ENCODE measurements at regions of chr10 and their contacts with region 1.

Region 1: DNA sequence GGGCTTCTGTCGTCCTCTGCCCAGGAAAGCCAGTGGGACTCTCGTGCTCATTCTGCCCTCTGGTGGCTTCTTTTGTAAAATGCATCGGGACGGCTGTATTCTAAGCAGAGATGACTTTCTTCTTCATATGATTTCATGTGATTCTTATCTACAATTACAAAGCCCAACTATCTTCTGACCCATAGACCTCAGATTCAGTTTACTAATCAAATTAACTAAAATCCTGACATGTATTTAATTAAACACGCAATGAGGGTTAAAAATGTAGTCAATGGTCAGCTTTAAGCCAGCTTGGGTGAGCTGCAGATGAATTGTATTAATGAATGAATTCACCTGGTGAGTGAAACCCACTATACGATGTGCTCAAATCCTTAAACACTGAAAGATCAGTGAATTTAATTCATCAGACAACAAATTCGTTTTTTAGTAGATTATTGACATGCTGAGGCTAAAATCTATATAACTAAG is 117.6 kb upstream of the FAM204A start:
- DNase-seq: peak; percentile 69
- ATAC-seq: peak; percentile 76
- H3K4me3 Mint-ChIP-seq: peak overlapping the region; percentile 25
- H3K27ac Mint-ChIP-seq: no peak overlapping the region
- H3K4me1 Mint-ChIP-seq: peaks cover 3% of the 10 kb centered on the region
- H3K27me3 Mint-ChIP-seq: peaks cover 32% of the 10 kb centered on the region

Region 2: DNA sequence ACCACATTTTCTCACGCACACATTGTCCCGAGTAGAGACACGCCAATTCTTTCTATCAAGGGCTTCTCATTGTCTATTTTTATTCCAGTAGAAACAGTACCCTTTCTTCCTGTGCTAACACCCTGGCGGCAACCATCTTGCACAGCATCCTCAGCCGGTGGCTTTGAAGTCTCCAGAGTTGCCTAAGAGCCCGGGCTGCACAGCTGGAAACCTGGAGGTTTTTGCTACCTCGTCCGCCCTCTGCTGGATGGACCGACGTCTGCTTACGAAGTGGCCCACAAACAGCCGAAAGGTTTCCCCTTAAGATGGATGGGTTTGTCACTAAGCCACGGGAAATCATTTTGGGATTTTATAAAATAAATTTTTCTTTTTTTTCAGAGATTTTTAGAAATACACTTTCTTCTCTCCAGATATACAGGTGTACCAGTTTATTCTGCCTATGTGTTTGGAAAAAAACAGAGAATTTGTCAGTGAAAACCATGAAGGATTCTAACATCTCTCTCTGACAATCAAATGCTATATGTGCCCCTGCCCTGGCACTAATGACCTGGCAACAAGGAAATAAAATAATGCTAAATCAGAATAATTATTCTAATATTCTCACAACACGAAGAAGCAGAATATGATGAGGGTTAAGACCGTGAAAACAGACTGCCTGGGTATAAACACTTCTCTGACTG is 35.8 kb before region 1 on chr10:
- CTCF ChIA-PET with region 1: no interaction called
- DNase-seq: peak; percentile 80
- ATAC-seq: peak; percentile 89
- H3K4me3 Mint-ChIP-seq: no peak overlapping the region
- H3K27ac Mint-ChIP-seq: no peak overlapping the region
- H3K4me1 Mint-ChIP-seq: peaks cover 3% of the 10 kb centered on the region
- H3K27me3 Mint-ChIP-seq: peaks cover 22% of the 10 kb centered on the region

Region 3: DNA sequence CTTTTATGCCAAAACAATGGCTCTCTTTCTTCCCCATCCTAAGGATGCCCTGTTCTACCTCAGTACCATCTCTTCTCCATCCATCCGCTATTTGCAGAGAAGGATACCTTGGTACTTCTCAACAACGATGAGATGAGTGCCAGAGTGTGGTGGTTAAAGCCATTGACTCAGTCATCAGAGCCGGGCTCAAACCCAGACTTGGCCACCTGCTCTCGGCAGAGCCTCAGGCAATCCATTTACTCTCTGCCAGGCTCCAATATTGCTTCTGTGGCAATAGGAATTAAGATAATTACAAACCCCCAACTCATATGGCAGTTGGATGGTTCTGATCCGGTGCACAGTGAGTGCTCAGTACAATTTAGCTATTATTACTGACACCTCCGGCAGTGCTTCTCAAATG is 14.4 kb after region 1 on chr10:
- CTCF ChIA-PET with region 1: interaction called, 11 read pairs
- DNase-seq: peak; percentile 1
- ATAC-seq: no peak
- H3K4me3 Mint-ChIP-seq: no peak overlapping the region
- H3K27ac Mint-ChIP-seq: no peak overlapping the region
- H3K4me1 Mint-ChIP-seq: no peaks in the 10 kb centered on the region
- H3K27me3 Mint-ChIP-seq: peaks cover 25% of the 10 kb centered on the region

Region 4: DNA sequence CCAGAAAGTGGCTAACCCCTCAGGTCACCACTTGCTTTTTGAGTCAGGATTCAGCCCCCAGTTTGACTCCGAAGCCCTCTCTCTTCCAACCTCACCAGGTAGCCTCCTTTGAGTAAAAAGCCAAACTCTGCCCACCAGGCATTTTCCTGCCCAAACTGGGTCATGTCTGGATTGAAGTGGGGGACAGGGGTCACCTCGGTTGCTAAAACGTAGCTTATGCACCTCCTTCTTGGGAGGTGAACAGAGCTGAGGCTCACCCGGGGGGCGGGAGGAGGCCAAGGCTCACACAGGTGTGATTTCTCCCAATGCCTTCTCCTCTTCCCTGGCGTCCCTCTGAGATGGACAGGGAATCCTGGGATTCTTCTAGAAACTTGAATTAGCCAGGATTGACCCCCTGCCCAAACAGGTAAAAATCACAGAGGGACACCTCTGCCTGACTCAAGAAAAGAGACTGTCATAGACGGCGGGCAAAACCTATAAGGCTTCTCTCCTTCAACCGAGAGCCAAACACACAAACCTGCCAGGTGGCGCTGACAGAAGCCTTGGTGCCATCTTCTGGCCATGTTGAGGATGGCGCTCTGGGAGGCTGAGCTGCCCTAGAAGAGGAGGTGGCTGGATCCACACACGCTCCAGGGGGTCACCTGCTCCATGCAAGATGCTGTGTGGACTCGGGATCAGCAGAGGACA is 84.1 kb after region 1 on chr10:
- CTCF ChIA-PET with region 1: interaction called, 26 read pairs
- DNase-seq: peak; percentile 67
- ATAC-seq: peak; percentile 86
- H3K4me3 Mint-ChIP-seq: no peak overlapping the region
- H3K27ac Mint-ChIP-seq: no peak overlapping the region
- H3K4me1 Mint-ChIP-seq: no peaks in the 10 kb centered on the region
- H3K27me3 Mint-ChIP-seq: peaks cover 39% of the 10 kb centered on the region